ENCODE measurements at regions of chr11 and their contacts with region 1.

Region 1: DNA sequence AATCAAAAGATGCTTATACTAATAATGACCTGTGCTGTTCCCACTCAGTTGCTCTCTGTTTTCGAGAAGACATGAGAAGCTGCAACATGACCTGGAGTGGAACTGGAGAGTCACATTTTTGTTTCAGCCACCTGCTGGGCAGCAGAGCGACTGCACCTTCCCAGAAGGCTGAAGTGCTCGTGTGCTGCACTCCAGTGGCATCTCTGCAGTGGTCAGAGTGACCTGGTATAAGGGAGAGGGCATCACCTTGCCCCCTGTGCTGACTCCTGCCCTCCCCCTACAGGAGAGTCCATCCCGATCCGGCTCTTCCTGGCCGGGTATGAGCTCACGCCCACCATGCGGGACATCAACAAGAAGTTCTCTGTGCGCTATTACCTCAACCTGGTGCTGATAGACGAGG is 8.5 kb downstream of the THYN1 start:
- DNase-seq: peak; percentile 48 to 52
- H3K4me3 ChIP-seq: no peak overlapping the region
- H3K4me3 Mint-ChIP-seq: no peak overlapping the region
- H3K27ac Mint-ChIP-seq: no peak overlapping the region
- H3K4me1 ChIP-seq: no peaks in the 10 kb centered on the region
- H3K4me1 Mint-ChIP-seq: no peaks in the 10 kb centered on the region
- H3K27me3 ChIP-seq: no peaks in the 10 kb centered on the region
- H3K27me3 Mint-ChIP-seq: no peaks in the 10 kb centered on the region
- CTCF ChIP-seq: peak; percentile 78 to 80

Region 2: GRCh38 chr11:134207538-134208239 is 37.0 kb before region 1 on chr11:
- CTCF ChIA-PET with region 1: interaction called, 6 read pairs
- POLR2A ChIA-PET with region 1: no interaction called
- intact Hi-C with region 1: loop called (anchors 1 kb)
- DNase-seq: peak; percentile 66 to 82
- H3K4me3 ChIP-seq: no peak overlapping the region
- H3K4me3 Mint-ChIP-seq: no peak overlapping the region
- H3K27ac Mint-ChIP-seq: no peak overlapping the region
- H3K4me1 ChIP-seq: no peaks in the 10 kb centered on the region
- H3K4me1 Mint-ChIP-seq: no peaks in the 10 kb centered on the region
- H3K27me3 ChIP-seq: no peaks in the 10 kb centered on the region
- H3K27me3 Mint-ChIP-seq: no peaks in the 10 kb centered on the region
- CTCF ChIP-seq: peak; percentile 62 to 94

Region 3: DNA sequence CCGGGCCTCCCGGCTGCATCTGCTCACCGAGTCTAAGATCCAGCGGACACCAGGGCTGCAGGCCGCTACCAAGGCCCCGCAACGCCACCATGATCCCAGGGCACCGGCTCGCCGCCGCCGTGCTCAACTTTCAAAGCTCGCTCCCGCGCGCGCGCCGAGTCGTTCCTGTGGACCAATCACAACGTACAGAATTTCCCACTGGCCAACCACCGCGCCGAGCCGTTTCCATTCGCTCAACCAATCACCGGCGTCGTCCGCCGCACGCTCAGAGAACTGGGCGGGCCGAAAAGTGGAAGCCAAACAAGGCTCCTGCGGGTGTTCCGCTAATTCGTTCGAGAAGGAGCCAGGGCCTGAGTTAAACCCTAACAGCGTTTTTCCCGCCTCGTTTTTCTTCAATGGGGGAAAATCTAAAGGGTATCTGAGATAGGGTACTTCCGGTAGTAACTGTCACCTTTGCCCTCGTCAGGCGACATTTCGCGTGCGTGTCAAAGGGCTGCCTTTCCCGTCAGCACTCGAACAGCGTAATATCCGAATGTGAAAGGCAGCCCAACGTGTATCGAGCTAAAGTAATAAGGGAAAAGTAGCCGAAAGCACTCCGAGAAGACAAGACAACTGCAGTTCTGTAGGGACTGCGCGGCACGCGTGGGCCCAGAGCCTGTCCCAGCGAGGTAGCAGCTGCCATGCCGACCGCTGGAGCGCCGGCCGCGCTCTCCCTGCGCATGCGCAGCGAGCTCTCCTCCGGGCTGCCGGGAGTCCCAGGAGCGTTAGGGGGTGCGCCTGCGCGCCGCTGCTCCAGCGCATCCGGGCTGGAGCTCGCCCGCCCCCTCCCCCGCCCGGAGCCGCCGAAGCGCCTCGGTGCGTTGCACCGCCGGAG is 20.6 kb before region 1 on chr11 and contains the starts of genes NCAPD3 and VPS26B:
- CTCF ChIA-PET with region 1: interaction called, 14 read pairs
- POLR2A ChIA-PET with region 1: interaction called, 5 read pairs
- intact Hi-C with region 1: loop called (anchors 2 kb)
- DNase-seq: peak; percentile 99
- H3K4me3 ChIP-seq: peak within 1 kb of the TSS; percentile 76
- H3K4me3 Mint-ChIP-seq: peak within 1 kb of the TSS; percentile 84
- H3K27ac Mint-ChIP-seq: peak within 1 kb of the TSS; percentile 66
- H3K4me1 ChIP-seq: peaks cover 19% of the 10 kb centered on the region
- H3K4me1 Mint-ChIP-seq: peaks cover 11% of the 10 kb centered on the region
- H3K27me3 ChIP-seq: no peaks in the 10 kb centered on the region
- H3K27me3 Mint-ChIP-seq: no peaks in the 10 kb centered on the region
- CTCF ChIP-seq: no peak
- total RNA-seq, gene NCAPD3: 97.8 and 108 TPM in 2 replicates
- total RNA-seq, gene VPS26B: 71.4 and 78.1 TPM in 2 replicates

Measured in Caco-2 (cell line).